ENCODE measurements at regions of chr12 and their contacts with region 1.

Region 1: DNA sequence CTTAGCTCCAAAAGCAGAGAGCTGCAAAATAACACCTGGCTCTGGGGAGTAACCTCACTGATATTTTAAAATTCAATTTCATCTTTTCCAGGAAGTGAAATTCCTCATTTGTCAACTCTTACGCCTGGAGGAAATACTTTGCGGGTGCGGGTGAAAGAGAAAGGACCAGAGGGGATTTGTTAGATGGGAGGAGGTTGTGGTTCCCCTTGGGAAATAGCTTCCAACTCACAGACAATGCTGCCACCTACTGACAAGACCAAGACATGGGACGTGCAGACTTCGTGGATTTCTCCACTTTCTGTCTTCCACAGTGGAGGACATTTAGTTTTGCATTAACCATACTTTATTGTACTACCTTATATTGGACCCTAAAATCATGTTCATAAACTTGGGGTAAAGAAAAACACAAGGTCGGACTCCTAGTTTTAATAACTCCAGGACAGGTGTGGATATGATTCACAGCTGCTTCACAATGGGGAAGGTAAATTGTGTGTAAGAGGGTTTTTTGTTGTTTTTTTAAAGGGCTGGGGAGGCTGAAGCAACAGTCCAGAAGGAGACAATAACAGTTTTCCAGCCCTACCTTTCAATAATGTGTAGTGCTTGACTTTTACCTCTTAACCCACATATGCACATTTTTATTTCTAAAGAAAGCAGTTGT is 10.8 kb downstream of the FBXL14 start:
- DNase-seq: peak; percentile 80
- H3K4me3 ChIP-seq: no peak overlapping the region
- H3K27ac ChIP-seq: no peak overlapping the region
- H3K4me1 ChIP-seq: peaks cover 6% of the 10 kb centered on the region
- H3K27me3 ChIP-seq: no peaks in the 10 kb centered on the region
- CTCF ChIP-seq: peak; percentile 74 to 79
- POLR2A ChIP-seq: no peak

Region 2: DNA sequence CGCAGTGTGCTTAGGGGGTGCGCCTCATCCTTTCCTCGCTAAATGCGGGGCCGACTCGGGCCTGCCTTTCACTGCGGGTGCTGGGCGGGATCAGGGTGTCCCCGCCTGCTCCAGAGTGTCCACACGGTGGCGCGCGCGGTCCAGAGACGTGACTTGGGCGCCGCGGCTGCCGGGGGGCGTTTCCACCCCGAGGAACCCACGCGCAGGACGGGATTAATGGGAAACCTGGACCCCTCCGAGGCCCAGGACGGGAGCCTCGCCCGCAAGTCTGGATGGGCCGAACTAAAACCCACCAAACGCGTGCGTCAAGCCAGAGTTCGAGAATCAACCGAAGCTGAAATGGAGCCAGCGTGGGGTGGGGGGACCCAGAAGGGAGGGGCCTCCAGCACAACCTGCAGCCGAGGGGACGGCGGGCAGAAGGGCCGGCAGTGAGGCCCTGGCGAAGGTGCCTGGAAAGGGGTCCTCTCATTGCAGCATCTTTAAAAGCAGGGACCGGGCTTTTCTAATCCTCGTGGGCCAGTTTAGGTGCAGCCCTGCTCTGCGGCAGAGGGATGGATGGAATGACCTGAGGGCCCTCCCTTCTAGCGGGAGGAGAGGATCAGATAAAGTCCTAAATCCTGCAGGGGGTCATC is 1013.6 kb before region 1 on chr12:
- CTCF ChIA-PET with region 1: interaction called, 15 read pairs
- POLR2A ChIA-PET with region 1: no interaction called
- dilution Hi-C with region 1: no loop called
- intact Hi-C with region 1: loop called (anchors 2 kb)
- DNase-seq: peak; percentile 58
- H3K4me3 ChIP-seq: peak overlapping the region; percentile 36 to 81 (median 67)
- H3K27ac ChIP-seq: peak overlapping the region; percentile 77
- H3K4me1 ChIP-seq: peaks cover 23% of the 10 kb centered on the region
- H3K27me3 ChIP-seq: peaks cover 2 to 3% of the 10 kb centered on the region in 2 experiments
- CTCF ChIP-seq: peak; percentile 79 to 97
- POLR2A ChIP-seq: no peak

Region 3: GRCh38 chr12:810671-811415 is 772.7 kb before region 1 on chr12:
- CTCF ChIA-PET with region 1: interaction called, 29 read pairs
- POLR2A ChIA-PET with region 1: no interaction called
- dilution Hi-C with region 1: no loop called
- intact Hi-C with region 1: loop called (anchors 1 kb)
- DNase-seq: no peak
- H3K4me3 ChIP-seq: no peak overlapping the region
- H3K27ac ChIP-seq: no peak overlapping the region
- H3K4me1 ChIP-seq: peaks cover 13% of the 10 kb centered on the region
- H3K27me3 ChIP-seq: no peaks in the 10 kb centered on the region
- CTCF ChIP-seq: no peak
- POLR2A ChIP-seq: no peak

Region 4: GRCh38 chr12:913919-914708 is 669.4 kb before region 1 on chr12:
- CTCF ChIA-PET with region 1: interaction called, 14 read pairs
- POLR2A ChIA-PET with region 1: no interaction called
- dilution Hi-C with region 1: no loop called
- intact Hi-C with region 1: no loop called
- DNase-seq: no peak
- H3K4me3 ChIP-seq: no peak overlapping the region
- H3K27ac ChIP-seq: no peak overlapping the region
- H3K4me1 ChIP-seq: peaks cover 29% of the 10 kb centered on the region
- H3K27me3 ChIP-seq: no peaks in the 10 kb centered on the region
- CTCF ChIP-seq: no peak
- POLR2A ChIP-seq: no peak

Region 5: DNA sequence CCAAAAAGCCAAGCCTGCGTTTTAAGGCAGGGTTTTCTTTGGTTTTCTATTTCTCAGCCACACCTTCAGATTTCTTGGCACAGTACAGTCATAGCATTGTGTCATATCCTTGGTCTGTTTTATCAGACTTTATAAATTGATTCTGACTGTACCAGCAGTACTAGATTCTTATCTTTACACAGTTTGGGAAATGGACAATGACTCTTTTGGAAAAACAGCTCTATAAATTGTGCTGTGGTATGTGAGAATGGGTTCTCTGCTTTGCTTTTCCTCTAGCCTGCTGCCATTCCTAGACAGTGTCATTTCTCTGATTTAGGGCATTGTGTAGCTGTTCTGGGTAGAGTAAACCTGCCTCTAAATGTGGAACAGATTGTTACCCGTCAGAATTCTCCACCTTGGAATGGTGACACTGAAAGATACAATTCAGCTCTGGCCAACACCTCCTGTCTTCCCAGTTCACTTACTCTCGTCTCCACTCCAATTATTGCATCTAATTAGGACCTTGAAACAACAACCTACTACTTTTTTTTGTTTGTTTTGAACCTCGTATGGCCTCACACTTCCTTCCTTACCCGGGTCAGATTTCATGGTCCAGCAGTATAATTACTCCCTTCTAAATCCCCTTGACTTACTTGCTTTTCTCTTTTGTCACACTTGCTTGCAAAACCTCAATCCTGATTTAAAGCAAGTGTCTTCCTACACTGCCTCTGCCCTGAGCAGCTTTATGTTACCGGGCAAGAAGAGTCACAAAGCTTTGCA is 366.2 kb before region 1 on chr12:
- CTCF ChIA-PET with region 1: no interaction called
- POLR2A ChIA-PET with region 1: no interaction called
- dilution Hi-C with region 1: no loop called
- intact Hi-C with region 1: loop called (anchors 5 kb)
- DNase-seq: peak; percentile 89
- H3K4me3 ChIP-seq: peak overlapping the region in 1 of 3 experiments; percentile 52
- H3K27ac ChIP-seq: peak overlapping the region; percentile 98
- H3K4me1 ChIP-seq: peaks cover 20% of the 10 kb centered on the region
- H3K27me3 ChIP-seq: no peaks in the 10 kb centered on the region
- CTCF ChIP-seq: no peak
- POLR2A ChIP-seq: peak; percentile 39

Region 6: GRCh38 chr12:1544996-1545700 is 38.4 kb before region 1 on chr12:
- CTCF ChIA-PET with region 1: interaction called, 11 read pairs
- POLR2A ChIA-PET with region 1: no interaction called
- dilution Hi-C with region 1: no loop called
- intact Hi-C with region 1: no loop called
- DNase-seq: peak; percentile 32
- H3K4me3 ChIP-seq: no peak overlapping the region
- H3K27ac ChIP-seq: no peak overlapping the region
- H3K4me1 ChIP-seq: no peaks in the 10 kb centered on the region
- H3K27me3 ChIP-seq: peaks cover 5 to 10% of the 10 kb centered on the region in 2 experiments
- CTCF ChIP-seq: peak in 1 of 2 donors; percentile 26
- POLR2A ChIP-seq: no peak

Measured in endothelial cell of umbilical vein (primary cell).